Mammary epithelial cell (primary cell): ENCODE measurements at regions of chr3 and their contacts with region 1.

Region 1: GRCh38 chr3:42749753-42750231 is 23.3 kb downstream of the CCDC13 start:
- DNase-seq: peak; percentile 16
- H3K4me3 ChIP-seq: no peak overlapping the region
- H3K27ac ChIP-seq: no peak overlapping the region
- H3K4me1 ChIP-seq: no peaks in the 10 kb centered on the region
- H3K27me3 ChIP-seq: no peaks in the 10 kb centered on the region
- CTCF ChIP-seq: peak; percentile 51 to 74

Region 2: GRCh38 chr3:42256135-42256819 is 493.5 kb before region 1 on chr3:
- CTCF ChIA-PET with region 1: no interaction called
- dilution Hi-C with region 1: no loop called
- in situ Hi-C with region 1: no loop called
- intact Hi-C with region 1: no loop called
- DNase-seq: peak; percentile 79
- H3K4me3 ChIP-seq: no peak overlapping the region
- H3K27ac ChIP-seq: peak overlapping the region; percentile 42
- H3K4me1 ChIP-seq: peaks cover 41% of the 10 kb centered on the region
- H3K27me3 ChIP-seq: no peaks in the 10 kb centered on the region
- CTCF ChIP-seq: no peak

Region 3: DNA sequence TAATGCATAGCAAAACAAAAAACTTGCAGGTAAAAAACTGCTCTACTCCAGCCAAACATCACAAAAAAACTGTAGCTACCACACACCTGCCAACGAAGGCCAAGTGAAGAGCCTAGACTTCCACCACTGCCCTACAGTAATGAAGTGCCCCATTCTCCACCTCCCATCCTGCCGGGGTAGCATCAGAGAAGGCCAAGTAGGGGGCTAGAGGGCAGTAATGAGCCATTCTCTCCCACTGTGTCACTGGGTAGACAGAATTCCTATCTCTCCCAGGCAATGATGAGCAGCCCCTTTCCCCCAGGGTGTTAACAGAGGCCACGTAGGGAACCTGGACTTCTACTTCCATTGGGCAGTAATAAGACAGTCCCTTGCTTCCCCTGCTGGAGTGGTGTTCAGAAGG is 177.5 kb before region 1 on chr3:
- CTCF ChIA-PET with region 1: no interaction called
- dilution Hi-C with region 1: no loop called
- in situ Hi-C with region 1: no loop called
- intact Hi-C with region 1: loop called (anchors 1 kb)
- DNase-seq: peak; percentile 35
- H3K4me3 ChIP-seq: no peak overlapping the region
- H3K27ac ChIP-seq: no peak overlapping the region
- H3K4me1 ChIP-seq: no peaks in the 10 kb centered on the region
- H3K27me3 ChIP-seq: no peaks in the 10 kb centered on the region
- CTCF ChIP-seq: peak; percentile 58 to 68

Region 4: DNA sequence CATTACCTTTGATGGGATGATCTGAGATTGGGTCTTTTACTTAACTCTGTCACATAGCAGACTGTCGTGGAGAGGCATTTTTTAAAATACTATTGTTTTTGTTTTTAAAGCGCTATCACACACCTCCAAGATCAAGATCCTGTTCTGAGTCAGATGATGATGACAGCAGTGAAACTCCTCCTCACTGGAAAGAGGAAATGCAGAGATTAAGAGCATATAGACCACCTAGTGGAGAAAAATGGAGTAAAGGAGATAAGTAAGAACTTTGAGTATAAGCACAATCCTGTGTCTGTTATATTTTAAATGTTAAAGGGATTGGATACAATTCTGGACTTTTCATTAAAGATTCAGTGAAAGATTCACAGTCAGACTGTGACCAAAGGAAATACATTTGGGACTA is 114.7 kb before region 1 on chr3:
- CTCF ChIA-PET with region 1: no interaction called
- dilution Hi-C with region 1: no loop called
- in situ Hi-C with region 1: loop called in 1 of 2 experiments (anchors 10 kb)
- intact Hi-C with region 1: no loop called
- DNase-seq: peak; percentile 33
- H3K4me3 ChIP-seq: no peak overlapping the region
- H3K27ac ChIP-seq: no peak overlapping the region
- H3K4me1 ChIP-seq: peaks cover 12% of the 10 kb centered on the region
- H3K27me3 ChIP-seq: no peaks in the 10 kb centered on the region
- CTCF ChIP-seq: no peak

Region 5: GRCh38 chr3:42831321-42831713 is 81.5 kb after region 1 on chr3:
- CTCF ChIA-PET with region 1: interaction called, 4 read pairs
- dilution Hi-C with region 1: no loop called
- in situ Hi-C with region 1: no loop called
- intact Hi-C with region 1: loop called (anchors 1 kb)
- DNase-seq: peak; percentile 56
- H3K4me3 ChIP-seq: no peak overlapping the region
- H3K27ac ChIP-seq: no peak overlapping the region
- H3K4me1 ChIP-seq: peaks cover 30% of the 10 kb centered on the region
- H3K27me3 ChIP-seq: no peaks in the 10 kb centered on the region
- CTCF ChIP-seq: peak; percentile 80 to 86

Region 6: GRCh38 chr3:42880601-42881451 is 131.0 kb after region 1 on chr3:
- CTCF ChIA-PET with region 1: no interaction called
- dilution Hi-C with region 1: no loop called
- in situ Hi-C with region 1: no loop called
- intact Hi-C with region 1: loop called (anchors 1 kb)
- DNase-seq: peak; percentile 72
- H3K4me3 ChIP-seq: peak overlapping the region; percentile 59 to 71 (median 63)
- H3K27ac ChIP-seq: no peak overlapping the region
- H3K4me1 ChIP-seq: peaks cover 10% of the 10 kb centered on the region
- H3K27me3 ChIP-seq: no peaks in the 10 kb centered on the region
- CTCF ChIP-seq: peak; percentile 72 to 91